Breast epithelium (tissue), 4 donors: ENCODE measurements at regions of chr17 and their contacts with region 1.

Region 1: GRCh38 chr17:8745586-8746500 is 1.2 kb upstream of the CCDC42 start:
- DNase-seq: peak in 1 of 2 donors; percentile 30
- H3K4me3 ChIP-seq: peak overlapping the region; percentile 56 to 66 (median 63)
- H3K27ac ChIP-seq: no peak overlapping the region
- H3K4me1 ChIP-seq: no peaks in the 10 kb centered on the region
- H3K27me3 ChIP-seq: no peaks in the 10 kb centered on the region
- CTCF ChIP-seq: peak; percentile 73 to 77 (median 75)
- POLR2A ChIP-seq: no peak

Region 2: DNA sequence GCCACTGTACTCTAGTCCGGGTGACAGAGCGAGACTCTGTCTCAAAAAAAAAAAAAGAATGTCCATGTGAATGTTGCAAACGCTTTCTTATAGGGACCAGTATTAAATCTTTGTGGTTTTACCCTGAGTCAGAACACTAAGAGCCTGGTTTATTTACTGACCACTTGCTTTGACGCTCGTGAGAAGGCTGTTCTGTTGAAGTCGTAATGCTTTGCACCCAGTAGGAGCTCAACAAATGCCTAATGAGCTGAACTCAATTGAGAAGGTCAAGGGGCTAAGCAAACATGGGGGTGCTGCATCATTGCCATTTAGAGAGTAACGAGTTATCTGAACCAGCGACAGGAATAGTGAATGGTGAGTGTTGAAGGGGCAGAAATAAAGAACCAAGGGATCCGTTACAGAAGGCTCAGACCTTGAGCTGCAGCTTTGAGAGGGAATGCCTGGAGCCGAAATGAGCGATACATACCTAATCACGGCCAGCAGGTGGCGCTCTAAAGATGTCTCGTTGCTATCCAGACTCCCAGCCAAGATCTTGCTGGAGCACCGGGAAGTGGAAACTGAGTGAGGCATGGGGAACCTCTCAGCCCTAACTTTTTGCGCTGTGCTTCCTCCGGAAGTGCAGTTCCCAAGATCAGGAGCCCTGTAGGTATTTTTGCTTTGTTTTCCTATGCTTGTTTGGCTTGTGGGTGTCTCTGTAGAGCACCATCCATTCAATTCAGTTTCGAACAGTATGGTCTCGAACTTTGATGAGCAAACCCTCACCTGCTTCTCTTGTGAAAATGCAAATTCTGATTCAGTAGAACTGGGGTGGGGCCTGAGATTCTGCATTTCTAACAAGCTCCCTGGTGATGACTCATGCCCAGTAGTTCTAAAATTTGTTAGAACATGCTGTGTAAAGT is 335.6 kb before region 1 on chr17:
- intact Hi-C with region 1: loop called (anchors 10 kb)
- DNase-seq: peak; percentile 77 to 91
- H3K4me3 ChIP-seq: no peak overlapping the region
- H3K27ac ChIP-seq: no peak overlapping the region
- H3K4me1 ChIP-seq: no peaks in the 10 kb centered on the region
- H3K27me3 ChIP-seq: no peaks in the 10 kb centered on the region
- CTCF ChIP-seq: peak; percentile 68 to 92 (median 85)
- POLR2A ChIP-seq: no peak

Region 3: GRCh38 chr17:8420041-8420934 is 325.6 kb before region 1 on chr17:
- intact Hi-C with region 1: no loop called
- DNase-seq: peak; percentile 45 to 64
- H3K4me3 ChIP-seq: no peak overlapping the region
- H3K27ac ChIP-seq: peak overlapping the region; percentile 6 to 64
- H3K4me1 ChIP-seq: peaks cover 0 to 6% of the 10 kb centered on the region in 2 donors
- H3K27me3 ChIP-seq: no peaks in the 10 kb centered on the region
- CTCF ChIP-seq: no peak
- POLR2A ChIP-seq: no peak

Region 4: DNA sequence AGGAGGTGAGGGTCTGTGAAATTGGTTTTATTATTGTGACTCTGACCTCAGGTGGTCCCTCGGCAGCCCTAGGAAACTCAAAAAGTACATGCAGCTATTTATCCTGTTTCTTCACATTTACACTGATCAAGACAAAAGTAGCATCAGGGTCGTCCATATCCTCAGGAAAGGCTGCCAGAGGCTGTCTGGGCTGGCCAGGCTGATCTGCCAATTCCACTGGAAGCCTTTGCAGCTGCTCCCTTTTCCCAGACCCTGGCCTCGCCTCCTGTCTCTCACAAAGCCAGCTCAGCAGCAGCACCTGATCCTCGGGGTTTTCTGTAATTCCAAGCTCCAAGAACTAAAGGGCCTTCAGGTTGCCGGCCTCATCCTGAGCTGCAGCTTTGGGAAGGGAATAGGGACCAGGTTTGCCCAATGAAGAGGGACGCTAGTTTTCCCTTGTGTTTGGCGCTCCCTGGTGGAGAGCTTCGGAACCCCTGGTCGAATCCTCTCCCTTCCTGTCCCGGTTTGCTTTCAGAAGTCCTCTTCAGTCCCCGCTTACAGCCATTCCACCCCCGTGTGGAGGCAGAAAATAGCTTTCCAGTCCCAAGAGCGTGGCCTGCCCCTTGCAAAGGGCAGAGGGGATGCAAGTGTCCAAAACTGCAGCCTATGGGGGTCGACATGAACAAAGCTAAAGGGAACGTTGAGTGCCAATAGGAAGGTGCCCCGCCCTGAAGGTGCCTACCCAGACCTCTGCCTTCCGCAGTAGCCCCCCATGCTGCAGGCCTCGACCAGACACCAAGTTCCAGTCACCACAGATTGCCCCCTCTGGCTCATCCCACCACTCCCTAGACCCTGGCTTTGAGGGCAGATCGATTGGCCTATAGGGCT is 39.9 kb after region 1 on chr17:
- intact Hi-C with region 1: no loop called
- DNase-seq: peak; percentile 44 to 76
- H3K4me3 ChIP-seq: no peak overlapping the region
- H3K27ac ChIP-seq: no peak overlapping the region
- H3K4me1 ChIP-seq: no peaks in the 10 kb centered on the region
- H3K27me3 ChIP-seq: no peaks in the 10 kb centered on the region
- CTCF ChIP-seq: peak; percentile 43 to 71 (median 70)
- POLR2A ChIP-seq: no peak

Region 5: DNA sequence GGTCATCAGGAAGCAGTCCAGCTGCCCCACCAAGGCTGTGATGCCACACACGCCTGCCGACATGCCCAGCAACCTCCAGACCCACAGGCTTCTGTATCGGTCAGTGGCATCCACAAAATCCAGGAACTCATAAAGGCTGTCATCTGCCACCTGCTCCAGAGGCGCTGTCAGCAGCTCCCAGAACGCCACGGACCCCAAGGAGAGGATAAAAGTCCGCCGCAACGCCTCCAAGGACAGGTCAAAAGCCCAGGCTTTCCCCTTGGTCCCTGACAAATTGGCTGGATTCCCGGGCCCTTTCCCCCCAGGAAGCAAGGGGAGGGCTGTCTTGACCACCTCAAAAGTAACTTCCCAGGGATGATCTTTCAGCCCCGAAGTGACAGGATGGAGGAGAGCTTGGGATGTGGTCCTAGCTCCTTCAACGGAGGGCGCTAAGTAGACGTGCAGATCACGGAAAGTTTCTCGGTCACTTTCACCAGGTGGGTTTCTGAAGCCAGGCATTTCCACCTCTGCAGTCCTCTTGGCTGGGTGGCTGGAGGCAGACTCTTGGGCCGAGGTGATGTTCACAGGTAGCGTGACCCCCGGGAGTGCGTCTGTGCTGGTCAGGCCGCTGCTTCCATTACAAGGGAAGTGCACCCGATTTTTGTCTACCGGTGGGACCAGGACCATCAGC is 52.5 kb after region 1 on chr17:
- intact Hi-C with region 1: no loop called
- DNase-seq: no peak
- H3K4me3 ChIP-seq: no peak overlapping the region
- H3K27ac ChIP-seq: no peak overlapping the region
- H3K4me1 ChIP-seq: peaks cover 0 to 5% of the 10 kb centered on the region in 2 donors
- H3K27me3 ChIP-seq: no peaks in the 10 kb centered on the region
- CTCF ChIP-seq: no peak
- POLR2A ChIP-seq: no peak